ENCODE measurements at regions of chr12 and their contacts with region 1.

Region 1: DNA sequence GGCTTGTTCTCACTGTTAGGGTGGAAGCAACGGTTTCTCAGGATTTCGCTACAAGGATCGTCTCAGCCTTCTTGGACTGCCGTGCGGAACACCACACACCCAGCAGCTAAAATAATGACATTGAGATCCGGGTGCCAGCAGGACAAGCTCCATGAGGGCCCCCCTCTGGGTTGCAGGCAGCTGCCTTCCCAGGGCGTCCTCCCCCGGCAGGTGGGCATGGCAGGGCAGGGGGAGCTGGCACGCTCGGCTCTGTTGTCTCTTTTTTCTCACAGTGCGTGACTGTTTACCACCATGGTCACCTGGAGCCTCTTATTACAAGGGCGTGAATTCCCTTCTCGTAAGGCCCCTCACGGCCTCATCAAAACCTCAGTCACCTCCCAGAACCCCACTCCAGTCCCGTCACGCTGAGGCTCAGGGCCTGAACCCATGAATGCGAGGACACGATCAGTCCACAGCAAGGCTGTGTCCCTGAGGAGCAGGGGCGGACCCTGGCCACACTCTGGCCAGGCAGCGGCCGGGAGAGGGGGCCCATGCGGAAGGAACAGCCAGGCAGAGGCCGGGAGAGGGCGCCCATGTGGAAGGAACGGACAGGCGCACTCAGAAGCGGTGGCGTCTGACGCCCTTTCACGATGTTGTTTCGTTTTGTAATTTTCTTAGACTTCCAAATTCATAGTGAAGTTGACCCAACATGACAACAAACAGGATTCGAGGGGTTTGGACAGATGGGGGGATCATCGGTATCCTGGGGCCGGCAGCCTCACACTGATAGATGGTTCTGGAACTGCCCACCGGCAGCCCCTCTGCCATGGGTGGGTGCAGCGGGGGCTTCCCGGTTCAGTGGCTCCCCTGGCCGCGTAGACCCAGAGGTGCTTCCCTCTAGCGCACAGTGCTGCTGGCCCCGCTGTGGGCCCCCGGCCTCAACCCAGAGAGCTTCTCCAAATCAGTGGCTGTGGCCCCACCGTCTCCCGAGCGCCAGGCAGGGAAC is 10.0 kb downstream of the LRCOL1 start:
- DNase-seq: peak in 6 of 9 experiments; percentile 24 to 62 (median 48)
- ATAC-seq: peak; percentile 39
- H3K4me3 ChIP-seq: peak overlapping the region; percentile 52 to 61
- H3K4me3 Mint-ChIP-seq: peak overlapping the region; percentile 80
- H3K27ac ChIP-seq: no peak overlapping the region
- H3K27ac Mint-ChIP-seq: peak overlapping the region; percentile 13
- H3K4me1 ChIP-seq: peaks cover 16% of the 10 kb centered on the region
- H3K4me1 Mint-ChIP-seq: peaks cover 18% of the 10 kb centered on the region
- H3K27me3 ChIP-seq: peaks cover 0 to 10% of the 10 kb centered on the region in 2 experiments
- H3K27me3 Mint-ChIP-seq: peaks cover 39% of the 10 kb centered on the region
- CTCF ChIP-seq: peak; percentile 34

Region 2: GRCh38 chr12:132572135-132572534 is 28.2 kb before region 1 on chr12:
- CTCF ChIA-PET with region 1: no interaction called
- POLR2A ChIA-PET with region 1: no interaction called
- intact Hi-C with region 1: no loop called
- DNase-seq: no peak
- ATAC-seq: no peak
- H3K4me3 ChIP-seq: no peak overlapping the region
- H3K4me3 Mint-ChIP-seq: no peak overlapping the region
- H3K27ac ChIP-seq: no peak overlapping the region
- H3K27ac Mint-ChIP-seq: no peak overlapping the region
- H3K4me1 ChIP-seq: no peaks in the 10 kb centered on the region
- H3K4me1 Mint-ChIP-seq: no peaks in the 10 kb centered on the region
- H3K27me3 ChIP-seq: no peaks in the 10 kb centered on the region
- H3K27me3 Mint-ChIP-seq: no peaks in the 10 kb centered on the region
- CTCF ChIP-seq: no peak

Region 3: DNA sequence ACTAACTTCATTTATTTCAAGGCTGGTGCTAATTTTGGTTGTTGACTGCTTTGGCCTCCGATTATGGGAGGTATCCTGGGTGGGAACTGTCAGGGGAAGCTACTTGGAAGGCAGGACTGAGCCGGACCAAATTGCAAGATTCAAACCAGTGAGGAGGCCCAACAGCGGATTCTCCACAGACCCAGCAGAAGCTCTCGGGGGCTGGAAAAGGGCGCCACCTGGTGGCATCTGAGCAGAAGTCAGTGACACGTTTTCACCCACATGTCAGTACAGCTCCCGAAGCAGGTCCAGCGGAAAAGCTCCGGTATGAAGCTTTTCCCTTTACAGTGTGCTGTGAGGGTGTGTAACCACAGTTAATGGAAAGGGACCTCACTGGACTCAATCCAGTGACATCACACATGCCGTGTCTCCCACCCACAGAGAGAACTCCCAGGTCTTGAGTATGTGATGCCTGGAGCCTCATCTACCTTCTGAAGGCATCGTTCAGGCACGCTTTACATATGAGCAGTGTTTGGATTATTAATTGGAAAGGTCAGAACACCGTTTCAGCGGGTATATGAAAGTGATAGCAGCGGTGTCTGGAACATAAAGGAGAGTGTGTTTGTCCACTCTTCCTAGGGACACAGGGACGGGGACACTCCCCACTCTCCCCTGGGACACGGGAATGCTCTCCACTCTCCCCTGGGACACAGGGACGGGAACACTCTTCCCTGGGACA is 14.7 kb after region 1 on chr12:
- CTCF ChIA-PET with region 1: interaction called, 24 read pairs
- POLR2A ChIA-PET with region 1: no interaction called
- intact Hi-C with region 1: loop called in 1 of 2 experiments (anchors 1 kb)
- DNase-seq: peak; percentile 62 to 90 (median 79)
- ATAC-seq: peak; percentile 91
- H3K4me3 ChIP-seq: no peak overlapping the region
- H3K4me3 Mint-ChIP-seq: no peak overlapping the region
- H3K27ac ChIP-seq: no peak overlapping the region
- H3K27ac Mint-ChIP-seq: no peak overlapping the region
- H3K4me1 ChIP-seq: peaks cover 11% of the 10 kb centered on the region
- H3K4me1 Mint-ChIP-seq: peaks cover 14% of the 10 kb centered on the region
- H3K27me3 ChIP-seq: peaks cover 20 to 22% of the 10 kb centered on the region in 2 experiments
- H3K27me3 Mint-ChIP-seq: peaks cover 45% of the 10 kb centered on the region
- CTCF ChIP-seq: peak; percentile 81

Measured in CD8-positive, alpha-beta T cell (primary cell).